Naive thymus-derived CD8-positive, alpha-beta T cell (primary cell): ENCODE measurements at regions of chr17 and their contacts with region 1.

Region 1: GRCh38 chr17:76219670-76220383 is 20.5 kb downstream of the RNF157 start:
- DNase-seq: no peak
- ATAC-seq: no peak
- H3K4me3 Mint-ChIP-seq: no peak overlapping the region
- H3K27ac Mint-ChIP-seq: peak overlapping the region in 5 of 10 donors; percentile 11 to 65 (median 43)
- H3K4me1 Mint-ChIP-seq: peaks cover 15 to 45% (median 37%) of the 10 kb centered on the region in 4 donors
- H3K27me3 Mint-ChIP-seq: no peaks in the 10 kb centered on the region

Region 2: GRCh38 chr17:76088036-76088867 is 131.6 kb before region 1 on chr17:
- POLR2A ChIA-PET with region 1: no interaction called
- DNase-seq: no peak
- ATAC-seq: no peak
- H3K4me3 Mint-ChIP-seq: no peak overlapping the region
- H3K27ac Mint-ChIP-seq: peak overlapping the region in 1 of 10 donors; percentile 38
- H3K4me1 Mint-ChIP-seq: peaks cover 0 to 5% (median 3%) of the 10 kb centered on the region in 4 donors
- H3K27me3 Mint-ChIP-seq: no peaks in the 10 kb centered on the region

Region 3: GRCh38 chr17:76124582-76125390 is 95.0 kb before region 1 on chr17:
- POLR2A ChIA-PET with region 1: no interaction called
- DNase-seq: no peak
- ATAC-seq: no peak
- H3K4me3 Mint-ChIP-seq: peak overlapping the region in 1 of 10 donors; percentile 45
- H3K27ac Mint-ChIP-seq: peak overlapping the region in 9 of 10 donors; percentile 9 to 83 (median 57)
- H3K4me1 Mint-ChIP-seq: peaks cover 21 to 44% (median 35%) of the 10 kb centered on the region in 4 donors
- H3K27me3 Mint-ChIP-seq: no peaks in the 10 kb centered on the region

Region 4: GRCh38 chr17:76182016-76182764 is 37.6 kb before region 1 on chr17:
- POLR2A ChIA-PET with region 1: no interaction called
- DNase-seq: peak; percentile 77 to 96 (median 91)
- ATAC-seq: peak; percentile 70 to 73
- H3K4me3 Mint-ChIP-seq: peak overlapping the region in 9 of 10 donors; percentile 6 to 75 (median 55)
- H3K27ac Mint-ChIP-seq: peak overlapping the region; percentile 31 to 98 (median 95)
- H3K4me1 Mint-ChIP-seq: peaks cover 23 to 69% (median 60%) of the 10 kb centered on the region in 4 donors
- H3K27me3 Mint-ChIP-seq: no peaks in the 10 kb centered on the region

Region 5: DNA sequence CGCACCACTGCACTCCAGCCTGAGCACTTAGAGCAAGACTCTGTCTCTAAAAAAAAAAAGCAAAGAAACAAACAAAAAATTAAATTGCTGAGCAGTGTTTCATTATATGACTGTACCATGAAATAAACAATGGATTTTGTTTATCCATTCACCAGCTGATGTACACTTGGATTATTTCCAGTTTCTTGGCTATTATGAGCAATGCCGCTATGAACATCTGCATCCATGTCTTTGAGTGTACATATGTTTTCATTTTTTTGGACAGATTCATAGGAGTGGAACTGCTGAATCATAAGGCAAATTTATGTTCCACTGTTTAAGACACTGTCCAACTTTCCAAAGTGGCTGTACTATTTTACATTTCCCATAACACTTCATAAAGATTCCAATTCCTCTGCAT is 12.5 kb after region 1 on chr17:
- POLR2A ChIA-PET with region 1: interaction called, 10 read pairs
- DNase-seq: no peak
- ATAC-seq: no peak
- H3K4me3 Mint-ChIP-seq: no peak overlapping the region
- H3K27ac Mint-ChIP-seq: peak overlapping the region in 5 of 10 donors; percentile 4 to 60 (median 31)
- H3K4me1 Mint-ChIP-seq: peaks cover 21 to 48% (median 41%) of the 10 kb centered on the region in 4 donors
- H3K27me3 Mint-ChIP-seq: no peaks in the 10 kb centered on the region